ENCODE measurements at regions of chr21 and their contacts with region 1.

Region 1: GRCh38 chr21:45820171-45821091 is 161.1 kb upstream of the COL6A1 start:
- DNase-seq: peak; percentile 93
- H3K4me3 Mint-ChIP-seq: peak overlapping the region; percentile 47
- H3K27ac Mint-ChIP-seq: peak overlapping the region; percentile 81
- H3K4me1 Mint-ChIP-seq: peaks cover 40% of the 10 kb centered on the region
- H3K27me3 Mint-ChIP-seq: no peaks in the 10 kb centered on the region

Region 2: GRCh38 chr21:45140346-45140940 is 680.0 kb before region 1 on chr21:
- intact Hi-C with region 1: loop called (anchors 2 kb)
- DNase-seq: peak; percentile 89
- H3K4me3 Mint-ChIP-seq: no peak overlapping the region
- H3K27ac Mint-ChIP-seq: no peak overlapping the region
- H3K4me1 Mint-ChIP-seq: peaks cover 14% of the 10 kb centered on the region
- H3K27me3 Mint-ChIP-seq: no peaks in the 10 kb centered on the region

Region 3: DNA sequence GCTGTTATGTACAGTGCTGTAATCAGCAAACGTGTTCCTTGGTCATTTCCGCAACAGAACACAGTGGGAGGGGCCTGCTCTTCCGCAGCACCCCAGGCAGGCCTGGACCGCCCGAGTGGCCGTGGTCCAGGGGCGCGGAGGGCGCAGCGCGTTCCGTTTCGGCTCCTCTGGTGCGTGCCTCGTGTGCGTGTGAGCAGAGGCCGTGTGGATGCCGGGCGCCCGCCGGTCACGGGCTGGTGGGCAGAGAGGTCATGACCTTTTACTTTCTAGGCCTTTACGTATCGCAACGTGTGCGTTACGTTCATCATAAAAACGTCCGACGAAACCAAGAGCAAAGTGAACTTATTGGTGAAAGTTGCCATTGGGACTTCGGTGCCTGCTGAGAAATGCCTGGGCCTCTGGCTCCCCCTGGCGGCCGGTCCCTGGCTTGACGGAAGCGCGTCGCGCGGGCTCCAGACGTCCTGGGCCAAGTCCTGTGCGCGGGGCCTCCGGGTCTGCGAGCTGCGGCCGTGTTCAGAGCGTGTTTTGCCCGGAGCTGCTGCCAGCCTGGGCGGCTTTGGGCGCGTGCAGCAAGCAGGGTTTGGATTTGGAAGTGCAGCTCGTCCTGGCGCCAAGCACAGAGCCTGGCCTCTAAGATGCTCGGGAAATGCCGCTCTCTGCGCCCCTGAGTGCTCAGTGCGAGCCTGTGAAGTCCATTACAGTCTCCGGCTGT is 381.1 kb before region 1 on chr21:
- intact Hi-C with region 1: loop called (anchors 10 kb)
- DNase-seq: peak; percentile 95
- H3K4me3 Mint-ChIP-seq: peak overlapping the region; percentile 71
- H3K27ac Mint-ChIP-seq: no peak overlapping the region
- H3K4me1 Mint-ChIP-seq: no peaks in the 10 kb centered on the region
- H3K27me3 Mint-ChIP-seq: peaks cover 1% of the 10 kb centered on the region

Region 4: GRCh38 chr21:45590246-45590725 is 230.1 kb before region 1 on chr21:
- intact Hi-C with region 1: loop called (anchors 1 kb)
- DNase-seq: peak; percentile 91
- H3K4me3 Mint-ChIP-seq: peak overlapping the region; percentile 58
- H3K27ac Mint-ChIP-seq: no peak overlapping the region
- H3K4me1 Mint-ChIP-seq: peaks cover 12% of the 10 kb centered on the region
- H3K27me3 Mint-ChIP-seq: peaks cover 22% of the 10 kb centered on the region

Region 5: DNA sequence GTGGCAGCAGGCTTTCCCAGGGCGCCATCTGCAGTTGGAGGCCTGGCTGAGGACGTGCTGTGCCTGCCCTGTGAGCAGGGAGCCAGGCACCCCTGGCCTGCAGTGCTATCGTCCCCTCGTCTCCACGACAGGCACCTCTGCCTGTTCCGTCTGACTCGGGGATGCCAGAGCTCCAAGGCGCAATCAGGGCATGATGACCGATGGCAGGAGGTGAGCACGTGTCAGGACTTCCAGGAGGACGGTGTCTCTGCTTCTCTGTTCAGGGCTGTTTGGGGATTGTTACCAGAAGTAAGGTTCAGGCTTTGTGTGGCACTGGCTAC is 51.7 kb before region 1 on chr21:
- intact Hi-C with region 1: loop called (anchors 1 kb)
- DNase-seq: peak; percentile 71
- H3K4me3 Mint-ChIP-seq: peak overlapping the region; percentile 63
- H3K27ac Mint-ChIP-seq: peak overlapping the region; percentile 92
- H3K4me1 Mint-ChIP-seq: peaks cover 43% of the 10 kb centered on the region
- H3K27me3 Mint-ChIP-seq: no peaks in the 10 kb centered on the region

Region 6: GRCh38 chr21:45954261-45954660 is 133.8 kb after region 1 on chr21:
- intact Hi-C with region 1: no loop called
- DNase-seq: no peak
- H3K4me3 Mint-ChIP-seq: no peak overlapping the region
- H3K27ac Mint-ChIP-seq: no peak overlapping the region
- H3K4me1 Mint-ChIP-seq: no peaks in the 10 kb centered on the region
- H3K27me3 Mint-ChIP-seq: peaks cover 15% of the 10 kb centered on the region

Region 7: GRCh38 chr21:46323227-46324128 is 503.0 kb after region 1 on chr21 and contains the start of gene C21orf58:
- intact Hi-C with region 1: loop called (anchors 5 kb)
- DNase-seq: peak; percentile 100
- H3K4me3 Mint-ChIP-seq: peak within 1 kb of the TSS; percentile 97
- H3K27ac Mint-ChIP-seq: peak within 1 kb of the TSS; percentile 99
- H3K4me1 Mint-ChIP-seq: peaks cover 32% of the 10 kb centered on the region
- H3K27me3 Mint-ChIP-seq: no peaks in the 10 kb centered on the region
- total RNA-seq, gene C21orf58: 28.4 and 33.4 TPM in 2 replicates